ENCODE measurements at regions of chr5 and their contacts with region 1.

Region 1: GRCh38 chr5:164504141-164504772 is 998.8 kb downstream of the MAT2B start:
- DNase-seq: peak; percentile 5
- ATAC-seq: peak; percentile 75
- H3K4me3 ChIP-seq: no peak overlapping the region
- H3K27ac ChIP-seq: no peak overlapping the region
- H3K4me1 ChIP-seq: no peaks in the 10 kb centered on the region
- H3K27me3 ChIP-seq: no peaks in the 10 kb centered on the region
- CTCF ChIP-seq: peak; percentile 69 to 77 (median 72)
- EP300 ChIP-seq: no peak
- POLR2A ChIP-seq: no peak
- RAD21 ChIP-seq: peak; percentile 88

Region 2: GRCh38 chr5:163564321-163564938 is 939.8 kb before region 1 on chr5:
- CTCF ChIA-PET with region 1: interaction called, 36 read pairs
- POLR2A ChIA-PET with region 1: no interaction called
- RAD21 ChIA-PET with region 1: interaction called, 10 read pairs
- SMC1A ChIA-PET with region 1: interaction called, 7 read pairs
- in situ Hi-C with region 1: loop called (anchors 10 kb)
- intact Hi-C with region 1: loop called (anchors 2 kb)
- DNase-seq: peak; percentile 30
- ATAC-seq: peak; percentile 50
- H3K4me3 ChIP-seq: no peak overlapping the region
- H3K27ac ChIP-seq: no peak overlapping the region
- H3K4me1 ChIP-seq: no peaks in the 10 kb centered on the region
- H3K27me3 ChIP-seq: peaks cover 0 to 8% of the 10 kb centered on the region in 2 experiments; a peak in 3 of 4 replicates
- CTCF ChIP-seq: peak; percentile 83 to 92 (median 84)
- EP300 ChIP-seq: no peak
- POLR2A ChIP-seq: no peak
- RAD21 ChIP-seq: peak; percentile 93

Region 3: DNA sequence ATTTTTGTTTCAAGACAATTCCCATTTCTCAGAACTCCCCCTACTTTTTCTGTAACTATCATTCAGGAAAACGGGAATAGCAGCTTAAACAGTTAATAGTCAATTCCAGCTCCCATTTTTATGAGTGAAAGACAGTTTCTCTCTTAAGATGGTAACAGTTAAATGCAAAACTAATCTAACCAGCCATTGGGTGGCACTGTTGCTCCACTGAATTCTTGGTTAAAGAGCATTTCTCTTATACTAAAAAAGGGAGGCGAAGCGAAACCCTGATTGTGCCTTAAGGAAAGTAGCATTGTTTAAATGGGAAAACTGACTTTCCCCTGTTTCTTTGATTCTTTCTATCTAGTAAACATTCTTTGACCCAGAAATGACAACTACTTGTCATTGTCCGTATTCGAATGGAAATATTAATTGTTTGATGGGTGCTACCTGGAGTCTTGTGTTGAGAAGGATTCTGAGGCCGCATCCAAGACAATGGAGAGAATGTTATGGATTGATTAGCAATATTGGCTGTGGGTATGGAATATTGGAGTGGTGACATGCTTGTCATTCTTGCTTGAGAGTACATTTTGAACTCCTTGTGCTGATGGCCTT is 491.1 kb before region 1 on chr5:
- CTCF ChIA-PET with region 1: interaction called, 92 read pairs
- POLR2A ChIA-PET with region 1: interaction called, 4 read pairs
- RAD21 ChIA-PET with region 1: interaction called, 92 read pairs
- SMC1A ChIA-PET with region 1: interaction called, 118 read pairs
- in situ Hi-C with region 1: loop called (anchors 10 kb)
- intact Hi-C with region 1: loop called (anchors 1 kb)
- DNase-seq: peak; percentile 19
- ATAC-seq: peak; percentile 85
- H3K4me3 ChIP-seq: no peak overlapping the region
- H3K27ac ChIP-seq: no peak overlapping the region
- H3K4me1 ChIP-seq: no peaks in the 10 kb centered on the region
- H3K27me3 ChIP-seq: no peaks in the 10 kb centered on the region
- CTCF ChIP-seq: peak; percentile 51 to 83 (median 60); a peak in 5 of 6 replicates
- EP300 ChIP-seq: no peak
- POLR2A ChIP-seq: no peak
- RAD21 ChIP-seq: peak; percentile 93

Region 4: DNA sequence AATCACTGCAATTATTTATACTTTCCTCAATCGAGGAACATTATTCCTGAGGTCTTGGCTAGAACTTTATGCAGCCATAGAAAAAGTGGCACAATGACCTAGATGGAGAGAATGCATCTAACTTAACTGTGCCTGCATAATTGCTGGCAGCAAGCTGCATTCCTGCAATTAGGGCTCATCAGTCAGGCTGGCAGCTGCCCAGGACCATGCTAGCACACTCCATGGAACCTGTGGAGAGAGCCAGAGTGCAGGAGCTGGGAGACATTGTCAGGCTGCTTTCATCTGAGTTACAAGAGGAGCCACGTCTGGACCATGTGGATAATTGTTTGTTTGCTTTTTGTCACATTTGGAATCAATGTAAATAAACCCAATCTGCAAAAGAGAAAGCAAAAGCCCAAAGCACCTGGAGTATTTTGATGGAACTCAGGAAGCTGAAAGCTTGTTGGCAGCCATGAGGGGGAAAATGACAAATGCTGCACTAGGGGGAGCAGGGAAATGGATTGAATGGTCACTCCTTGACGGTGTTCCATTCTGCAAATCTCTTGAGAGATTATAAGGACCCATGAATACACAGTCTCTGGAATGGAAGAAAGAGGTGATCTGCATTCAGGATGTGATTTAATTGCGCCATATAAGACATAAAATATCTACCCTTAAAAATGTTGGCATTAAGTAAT is 158.9 kb before region 1 on chr5:
- CTCF ChIA-PET with region 1: interaction called, 11 read pairs
- POLR2A ChIA-PET with region 1: no interaction called
- RAD21 ChIA-PET with region 1: interaction called, 6 read pairs
- SMC1A ChIA-PET with region 1: interaction called, 3 read pairs
- in situ Hi-C with region 1: no loop called
- intact Hi-C with region 1: no loop called
- DNase-seq: no peak
- ATAC-seq: no peak
- H3K4me3 ChIP-seq: no peak overlapping the region
- H3K27ac ChIP-seq: no peak overlapping the region
- H3K4me1 ChIP-seq: no peaks in the 10 kb centered on the region
- H3K27me3 ChIP-seq: no peaks in the 10 kb centered on the region
- CTCF ChIP-seq: no peak
- EP300 ChIP-seq: no peak
- POLR2A ChIP-seq: no peak
- RAD21 ChIP-seq: no peak

Region 5: DNA sequence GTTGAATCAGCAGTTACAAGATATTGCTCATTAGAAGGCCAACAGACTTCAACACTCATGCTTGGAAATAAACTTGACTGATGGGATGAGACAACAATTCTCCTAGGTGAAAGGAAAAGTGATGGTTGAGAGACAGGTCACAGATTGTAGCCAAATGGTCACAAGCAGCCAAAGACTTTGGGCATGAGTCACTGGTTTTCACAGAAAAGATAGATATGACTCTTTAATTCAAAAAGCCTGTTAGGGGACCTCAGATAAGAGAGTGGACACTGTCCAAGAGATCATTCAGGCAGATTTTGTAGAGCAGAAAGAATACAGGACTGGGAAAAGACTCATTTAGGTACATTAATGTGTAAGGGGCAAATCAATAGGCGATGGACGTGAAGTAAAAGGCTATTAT is 16.3 kb before region 1 on chr5:
- CTCF ChIA-PET with region 1: interaction called, 12 read pairs
- POLR2A ChIA-PET with region 1: no interaction called
- RAD21 ChIA-PET with region 1: interaction called, 3 read pairs
- SMC1A ChIA-PET with region 1: interaction called, 8 read pairs
- in situ Hi-C with region 1: no loop called
- intact Hi-C with region 1: no loop called
- DNase-seq: no peak
- ATAC-seq: no peak
- H3K4me3 ChIP-seq: no peak overlapping the region
- H3K27ac ChIP-seq: no peak overlapping the region
- H3K4me1 ChIP-seq: no peaks in the 10 kb centered on the region
- H3K27me3 ChIP-seq: no peaks in the 10 kb centered on the region
- CTCF ChIP-seq: no peak
- EP300 ChIP-seq: no peak
- POLR2A ChIP-seq: no peak
- RAD21 ChIP-seq: no peak

Region 6: GRCh38 chr5:164672931-164673694 is 168.9 kb after region 1 on chr5:
- CTCF ChIA-PET with region 1: interaction called, 26 read pairs
- POLR2A ChIA-PET with region 1: no interaction called
- RAD21 ChIA-PET with region 1: interaction called, 14 read pairs
- SMC1A ChIA-PET with region 1: interaction called, 11 read pairs
- in situ Hi-C with region 1: no loop called
- intact Hi-C with region 1: loop called (anchors 10 kb)
- DNase-seq: no peak
- ATAC-seq: peak; percentile 68
- H3K4me3 ChIP-seq: no peak overlapping the region
- H3K27ac ChIP-seq: no peak overlapping the region
- H3K4me1 ChIP-seq: no peaks in the 10 kb centered on the region
- H3K27me3 ChIP-seq: no peaks in the 10 kb centered on the region
- CTCF ChIP-seq: peak in 1 of 3 experiments; percentile 32; a peak in 1 of 6 replicates
- EP300 ChIP-seq: no peak
- POLR2A ChIP-seq: no peak
- RAD21 ChIP-seq: peak; percentile 31; the same call in 1 of the 2 replicates